Activated naive CD4-positive, alpha-beta T cell treated with anti-CD3 and anti-CD28 coated beads for 36 hours (primary cell): ENCODE measurements at regions of chr4 and their contacts with region 1.

Region 1: GRCh38 chr4:77843628-77844027 is 19.0 kb upstream of the MRPL1 start:
- DNase-seq: no peak
- H3K4me3 Mint-ChIP-seq: no peak overlapping the region
- H3K27ac Mint-ChIP-seq: peak overlapping the region; percentile 16
- H3K4me1 Mint-ChIP-seq: peaks cover 22% of the 10 kb centered on the region
- H3K27me3 Mint-ChIP-seq: no peaks in the 10 kb centered on the region

Region 2: DNA sequence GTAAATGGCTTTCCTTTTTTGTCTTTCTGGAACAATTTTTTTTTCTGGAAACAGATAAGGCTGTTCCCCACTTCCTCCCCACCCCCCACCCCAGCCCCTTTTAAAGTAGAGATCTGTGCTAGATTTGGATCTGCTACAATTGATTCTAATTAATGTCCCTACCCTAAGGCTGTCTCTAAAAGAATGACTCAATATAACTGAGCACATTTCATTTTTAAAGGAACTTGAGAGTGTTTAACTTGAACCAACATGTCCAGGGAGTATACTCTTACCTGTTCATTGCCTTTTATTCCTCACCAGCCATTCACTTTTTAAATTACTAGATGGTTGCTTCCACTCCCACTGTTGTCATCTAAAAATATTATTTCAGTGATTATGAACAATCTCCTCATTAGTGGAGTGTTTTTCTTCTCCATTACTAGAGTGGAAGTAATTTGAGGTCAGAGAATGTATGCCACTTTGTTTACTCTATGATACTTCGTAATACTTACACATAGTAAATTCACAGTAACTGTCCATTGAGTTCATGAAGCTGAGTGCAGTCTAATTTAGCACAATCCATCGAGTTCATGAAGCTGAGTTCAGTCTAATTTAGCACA is 10.4 kb before region 1 on chr4:
- CTCF ChIA-PET with region 1: interaction called, 4 read pairs
- intact Hi-C with region 1: loop called (anchors 1 kb)
- DNase-seq: no peak
- H3K4me3 Mint-ChIP-seq: no peak overlapping the region
- H3K27ac Mint-ChIP-seq: no peak overlapping the region
- H3K4me1 Mint-ChIP-seq: peaks cover 16% of the 10 kb centered on the region
- H3K27me3 Mint-ChIP-seq: no peaks in the 10 kb centered on the region